ENCODE measurements at regions of chr20 and their contacts with region 1.

Region 1: DNA sequence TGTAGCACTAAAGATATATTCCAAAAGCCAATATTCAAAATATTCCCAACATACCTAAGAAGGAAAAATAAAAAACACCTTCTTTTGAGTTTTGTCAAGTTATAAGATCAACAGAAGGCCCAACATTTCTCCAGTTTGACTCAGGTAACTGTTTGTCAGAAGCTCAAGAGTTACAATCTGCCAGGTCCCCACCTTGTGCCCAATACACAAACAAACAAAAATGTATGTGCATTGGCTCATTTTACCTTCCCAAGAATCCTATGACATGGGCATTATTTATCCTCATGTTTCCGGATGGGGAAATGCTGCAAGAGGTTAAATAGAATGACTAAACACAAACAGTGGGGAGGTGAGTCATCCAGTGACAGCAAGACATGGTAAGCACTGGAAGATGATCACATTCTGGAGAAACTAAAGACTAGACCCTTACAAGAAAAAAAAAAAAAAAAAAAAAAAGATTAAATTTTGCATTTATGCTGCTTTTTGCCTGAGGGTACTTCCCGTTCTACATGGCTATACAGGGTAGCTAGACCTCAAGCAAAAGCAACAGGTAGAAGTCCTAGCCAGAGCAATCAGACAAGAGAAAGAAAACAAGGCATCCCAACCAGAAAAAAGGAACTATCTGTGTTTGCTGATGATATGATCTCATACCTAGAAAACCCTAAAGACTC is 23.6 kb upstream of the ANKRD60 start:
- DNase-seq: peak; percentile 88
- ATAC-seq: peak; percentile 61; the same call in 2 of the 3 replicates
- H3K4me3 ChIP-seq: no peak overlapping the region
- H3K27ac ChIP-seq: no peak overlapping the region
- H3K4me1 ChIP-seq: peaks cover 14% of the 10 kb centered on the region
- H3K27me3 ChIP-seq: no peaks in the 10 kb centered on the region
- CTCF ChIP-seq: no peak
- EP300 ChIP-seq: peak in 1 of 2 experiments; percentile 87; a peak in 2 of 4 replicates
- POLR2A ChIP-seq: no peak
- RAD21 ChIP-seq: no peak

Region 2: GRCh38 chr20:58293453-58293852 is 41.4 kb after region 1 on chr20:
- CTCF ChIA-PET with region 1: no interaction called
- POLR2A ChIA-PET with region 1: no interaction called
- in situ Hi-C with region 1: no loop called
- intact Hi-C with region 1: loop called (anchors 5 kb)
- DNase-seq: peak; percentile 28
- ATAC-seq: peak; percentile 84
- H3K4me3 ChIP-seq: no peak overlapping the region
- H3K27ac ChIP-seq: no peak overlapping the region
- H3K4me1 ChIP-seq: peaks cover 29% of the 10 kb centered on the region
- H3K27me3 ChIP-seq: no peaks in the 10 kb centered on the region
- CTCF ChIP-seq: no peak
- EP300 ChIP-seq: no peak
- POLR2A ChIP-seq: no peak
- RAD21 ChIP-seq: no peak

Measured in HepG2 (cell line).